Activated CD8-positive, alpha-beta memory T cell treated with anti-CD3 and anti-CD28 coated beads, Interleukin-2, amount 10 ng/mL, durations not matched to agents 7 days and 5 days (primary cell): ENCODE measurements at regions of chr17 and their contacts with region 1.

Region 1: GRCh38 chr17:28896884-28897768 is at the start of gene FLOT2:
- DNase-seq: peak; percentile 78
- ATAC-seq: peak; percentile 69
- H3K4me3 Mint-ChIP-seq: peak within 1 kb of the TSS; percentile 91
- H3K27ac Mint-ChIP-seq: peak within 1 kb of the TSS; percentile 93
- H3K4me1 Mint-ChIP-seq: peaks cover 63% of the 10 kb centered on the region
- H3K27me3 Mint-ChIP-seq: no peaks in the 10 kb centered on the region
- total RNA-seq, gene FLOT2: 143 to 191 TPM

Region 2: DNA sequence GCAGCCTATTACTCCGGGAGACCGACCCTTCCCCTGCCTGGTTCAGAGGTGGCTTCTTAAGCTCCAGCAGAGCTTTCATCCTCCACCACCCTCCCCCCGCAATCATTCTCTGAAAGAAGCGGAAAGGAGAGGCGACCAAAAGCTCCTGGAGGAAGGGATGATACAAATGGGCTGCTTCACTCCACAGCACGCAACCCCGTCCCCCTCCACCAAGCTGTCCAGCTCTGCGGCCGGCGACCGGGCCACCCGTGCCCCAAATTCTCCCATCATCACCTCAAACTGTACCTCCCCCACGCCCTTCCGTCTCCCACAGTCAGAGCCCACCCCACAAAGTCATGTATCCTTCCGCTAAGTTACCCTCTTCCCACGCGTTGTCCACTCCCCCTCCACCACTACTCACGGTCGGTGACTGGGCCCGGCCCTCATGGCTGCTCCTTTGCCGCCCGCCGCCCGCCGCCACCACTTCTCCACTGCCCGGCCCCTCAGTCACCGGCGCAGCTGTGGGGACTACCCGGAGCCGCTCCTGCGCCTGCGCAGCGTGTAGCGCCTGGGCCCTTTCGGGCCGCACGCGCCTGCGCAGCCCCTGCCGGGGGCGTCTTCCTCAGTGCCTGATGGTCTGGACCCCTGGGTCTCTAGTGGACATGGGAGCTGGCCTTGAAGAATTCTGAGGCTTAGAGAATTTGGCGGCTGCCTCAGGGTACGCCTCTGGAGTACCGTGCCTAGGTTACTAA is 54.7 kb before region 1 on chr17 and contains the start of gene FAM222B:
- CTCF ChIA-PET with region 1: interaction called, 25 read pairs
- DNase-seq: peak; percentile 90
- ATAC-seq: peak; percentile 100
- H3K4me3 Mint-ChIP-seq: peak within 1 kb of the TSS; percentile 99
- H3K27ac Mint-ChIP-seq: peak within 1 kb of the TSS; percentile 96
- H3K4me1 Mint-ChIP-seq: peaks cover 21% of the 10 kb centered on the region
- H3K27me3 Mint-ChIP-seq: no peaks in the 10 kb centered on the region
- total RNA-seq, gene FAM222B: 14.5 to 19.6 TPM

Region 3: GRCh38 chr17:28908640-28909167 is 11.6 kb after region 1 on chr17:
- CTCF ChIA-PET with region 1: interaction called, 28 read pairs
- DNase-seq: no peak
- ATAC-seq: no peak
- H3K4me3 Mint-ChIP-seq: no peak overlapping the region
- H3K27ac Mint-ChIP-seq: peak overlapping the region; percentile 13
- H3K4me1 Mint-ChIP-seq: peaks cover 7% of the 10 kb centered on the region
- H3K27me3 Mint-ChIP-seq: no peaks in the 10 kb centered on the region